K562 (cell line): ENCODE measurements at regions of chr1 and their contacts with region 1.

Region 1: GRCh38 chr1:233790662-233791375 is 113.7 kb upstream of the SLC35F3 start:
- DNase-seq: peak; percentile 77 to 86 (median 81)
- ATAC-seq: peak; percentile 99
- H3K4me3 ChIP-seq: no peak overlapping the region
- H3K27ac ChIP-seq: no peak overlapping the region
- H3K4me1 ChIP-seq: no peaks in the 10 kb centered on the region
- H3K27me3 ChIP-seq: no peaks in the 10 kb centered on the region
- CTCF ChIP-seq: peak; percentile 89 to 95 (median 93)
- EP300 ChIP-seq: no peak
- POLR2A ChIP-seq: no peak
- RAD21 ChIP-seq: peak; percentile 93 to 98

Region 2: GRCh38 chr1:233252441-233252840 is 538.4 kb before region 1 on chr1:
- CTCF ChIA-PET with region 1: no interaction called
- POLR2A ChIA-PET with region 1: no interaction called
- in situ Hi-C with region 1: no loop called
- intact Hi-C with region 1: no loop called
- DNase-seq: no peak
- ATAC-seq: no peak
- H3K4me3 ChIP-seq: no peak overlapping the region
- H3K27ac ChIP-seq: no peak overlapping the region
- H3K4me1 ChIP-seq: no peaks in the 10 kb centered on the region
- H3K27me3 ChIP-seq: 0 out of 5 replicates have a peak, but pooled peaks cover 0 to 2% of the 10 kb centered on the region in 2 experiments
- CTCF ChIP-seq: no peak
- EP300 ChIP-seq: no peak
- POLR2A ChIP-seq: no peak
- RAD21 ChIP-seq: no peak

Region 3: DNA sequence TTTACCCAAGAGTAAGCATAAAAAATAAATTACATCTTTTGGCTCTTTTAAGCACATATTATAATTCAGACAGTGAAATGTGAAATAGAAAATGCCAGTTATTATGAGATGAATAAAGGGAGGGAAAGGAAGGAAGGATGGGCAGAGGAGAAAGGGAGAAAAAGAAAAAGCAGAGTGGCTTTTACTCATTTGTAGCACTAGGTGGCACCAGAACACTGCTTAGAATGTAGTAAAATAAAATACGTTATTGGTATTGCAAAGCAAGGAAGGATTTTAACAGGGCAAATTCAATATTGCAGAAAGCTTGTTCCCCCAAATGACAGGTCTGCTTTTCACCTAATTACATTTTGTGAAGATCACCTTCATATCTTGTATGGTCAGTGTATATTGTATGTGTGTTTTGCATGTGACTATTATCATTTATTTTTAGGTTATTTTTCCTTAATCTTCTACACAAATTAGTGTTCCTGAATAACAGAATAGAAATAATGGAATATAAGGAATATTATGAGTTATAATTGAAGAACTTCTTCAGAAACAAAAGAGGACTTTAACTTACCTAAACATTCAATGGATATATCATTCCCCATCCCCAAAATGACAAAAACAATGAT is 486.2 kb before region 1 on chr1:
- CTCF ChIA-PET with region 1: no interaction called
- POLR2A ChIA-PET with region 1: no interaction called
- in situ Hi-C with region 1: no loop called
- intact Hi-C with region 1: loop called (anchors 10 kb)
- DNase-seq: peak; percentile 20 to 29 (median 26)
- ATAC-seq: peak; percentile 69
- H3K4me3 ChIP-seq: no peak overlapping the region
- H3K27ac ChIP-seq: no peak overlapping the region
- H3K4me1 ChIP-seq: no peaks in the 10 kb centered on the region
- H3K27me3 ChIP-seq: no peaks in the 10 kb centered on the region
- CTCF ChIP-seq: peak; percentile 45 to 82 (median 68); a peak in 5 of 6 replicates
- EP300 ChIP-seq: no peak
- POLR2A ChIP-seq: no peak
- RAD21 ChIP-seq: peak; percentile 74 to 85

Region 4: DNA sequence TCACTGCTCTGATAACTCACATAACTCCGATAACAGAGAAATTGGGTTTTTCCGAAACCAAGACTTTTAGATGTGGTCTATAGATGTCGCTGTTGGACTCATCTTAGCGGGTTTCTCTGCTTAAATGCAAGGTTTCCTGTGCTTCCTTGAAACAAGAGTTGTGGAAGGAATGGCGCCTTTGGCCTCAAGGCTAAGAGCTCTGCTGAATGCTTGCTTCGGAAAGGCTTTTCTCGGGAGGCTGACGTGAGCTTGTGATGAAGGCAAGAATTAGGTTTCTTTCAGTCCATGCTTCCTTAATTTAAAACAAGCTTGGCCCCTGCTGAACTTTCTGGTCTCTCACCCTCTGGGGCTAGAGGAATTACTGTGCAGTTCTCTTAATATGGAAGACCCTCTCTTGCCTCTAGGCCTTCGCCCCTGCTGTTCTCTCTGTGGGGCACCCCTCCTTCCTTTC is 349.8 kb before region 1 on chr1:
- CTCF ChIA-PET with region 1: interaction called, 14 read pairs
- POLR2A ChIA-PET with region 1: interaction called, 3 read pairs
- in situ Hi-C with region 1: no loop called
- intact Hi-C with region 1: loop called (anchors 1 kb)
- DNase-seq: peak; percentile 37 to 79 (median 52)
- ATAC-seq: peak; percentile 90
- H3K4me3 ChIP-seq: no peak overlapping the region
- H3K27ac ChIP-seq: no peak overlapping the region
- H3K4me1 ChIP-seq: peaks cover 0 to 4% of the 10 kb centered on the region in 2 experiments; a peak in 2 of 5 replicates
- H3K27me3 ChIP-seq: no peaks in the 10 kb centered on the region
- CTCF ChIP-seq: peak; percentile 78 to 95 (median 83)
- EP300 ChIP-seq: 0 out of 2 replicates have a peak, but pooled peaks have one; percentile 12
- POLR2A ChIP-seq: no peak
- RAD21 ChIP-seq: peak; percentile 91 to 95

Region 5: DNA sequence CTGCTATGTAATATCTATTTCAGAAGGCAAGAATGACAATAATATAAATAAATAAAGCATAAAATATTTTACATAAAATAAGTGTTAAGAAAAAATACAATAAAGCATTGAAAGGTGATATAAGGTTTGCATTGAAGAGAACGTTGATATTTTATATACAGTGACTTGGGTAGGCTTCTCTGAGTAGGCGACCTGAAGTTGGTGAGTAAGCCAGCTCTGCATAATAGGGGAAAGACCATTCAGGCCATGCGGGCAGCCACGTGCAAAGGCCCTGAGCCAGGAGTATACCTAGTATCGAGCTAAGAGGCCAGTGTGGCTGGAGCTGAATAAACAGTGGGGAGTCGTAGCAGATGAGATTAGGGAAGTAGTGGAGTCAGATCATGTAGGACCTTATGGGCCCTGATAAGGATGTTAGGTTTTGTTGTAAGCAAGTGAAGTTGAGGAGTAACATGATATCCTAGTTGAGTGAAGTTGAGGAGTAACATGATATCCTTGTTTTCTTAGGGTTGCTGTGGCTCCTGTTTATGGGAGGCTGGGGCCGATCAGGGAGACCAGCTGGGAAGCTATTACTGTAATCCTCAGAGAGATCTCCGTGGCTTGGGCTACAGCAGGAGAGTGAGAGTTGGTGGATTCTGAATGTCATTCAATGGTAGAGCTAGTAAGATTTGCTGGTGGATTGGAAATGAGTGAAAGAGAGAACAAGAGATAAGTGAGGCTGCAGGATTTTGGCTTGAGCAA is 154.9 kb before region 1 on chr1:
- CTCF ChIA-PET with region 1: no interaction called
- POLR2A ChIA-PET with region 1: no interaction called
- in situ Hi-C with region 1: no loop called
- intact Hi-C with region 1: loop called (anchors 10 kb)
- DNase-seq: peak; percentile 92 to 98 (median 94)
- ATAC-seq: peak; percentile 97
- H3K4me3 ChIP-seq: no peak overlapping the region; the same call in 1 of the 2 replicates
- H3K27ac ChIP-seq: peak overlapping the region; percentile 90
- H3K4me1 ChIP-seq: peaks cover 11 to 43% of the 10 kb centered on the region in 2 experiments
- H3K27me3 ChIP-seq: no peaks in the 10 kb centered on the region
- CTCF ChIP-seq: 0 out of 6 replicates have a peak, but pooled peaks of 1 of the 3 experiments have one; percentile 6
- EP300 ChIP-seq: peak; percentile 98
- POLR2A ChIP-seq: peak; percentile 56; the same call in 1 of the 2 replicates
- RAD21 ChIP-seq: peak; percentile 4 to 41; a peak in 2 of 4 replicates

Region 6: DNA sequence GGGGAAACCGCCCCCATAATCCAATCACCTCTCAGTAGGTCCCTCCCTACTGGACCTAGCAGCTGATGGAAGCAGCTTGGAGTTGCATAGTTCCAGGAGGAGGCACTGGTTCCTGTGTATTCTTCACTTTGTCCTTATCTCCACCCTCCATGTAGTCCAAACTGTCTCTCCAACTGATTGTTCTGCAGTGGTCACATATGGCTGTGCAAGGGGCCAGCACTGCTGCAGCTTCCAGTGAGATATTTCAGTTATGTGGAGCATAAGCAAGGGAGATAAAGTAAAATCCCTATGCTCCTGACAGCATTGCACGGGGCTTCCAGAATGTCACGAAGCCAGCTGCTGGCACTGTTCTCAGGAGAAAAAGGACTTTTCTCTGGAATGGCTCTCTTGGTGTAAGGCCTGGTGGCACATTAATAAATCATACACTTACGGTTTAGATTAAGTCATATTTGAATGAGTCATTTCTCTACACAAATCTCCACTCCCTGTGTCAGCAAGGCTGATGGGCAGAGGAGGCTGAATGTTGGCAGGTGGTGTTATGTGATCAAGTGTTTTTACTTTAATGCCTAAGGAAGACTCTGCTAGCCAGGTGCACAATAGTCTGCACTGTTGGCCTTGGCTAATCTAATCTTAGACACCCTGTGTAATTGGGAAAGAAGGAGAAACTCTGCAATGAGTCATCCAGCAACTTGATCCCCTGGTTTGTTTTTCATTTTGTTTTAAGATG is 83.5 kb before region 1 on chr1:
- CTCF ChIA-PET with region 1: no interaction called
- POLR2A ChIA-PET with region 1: no interaction called
- in situ Hi-C with region 1: no loop called
- intact Hi-C with region 1: loop called (anchors 5 kb)
- DNase-seq: peak; percentile 37 to 89 (median 65)
- ATAC-seq: peak; percentile 93
- H3K4me3 ChIP-seq: no peak overlapping the region
- H3K27ac ChIP-seq: peak overlapping the region; percentile 73
- H3K4me1 ChIP-seq: peaks cover 7 to 45% of the 10 kb centered on the region in 2 experiments; a peak in 4 of 5 replicates
- H3K27me3 ChIP-seq: no peaks in the 10 kb centered on the region
- CTCF ChIP-seq: peak; percentile 43 to 53 (median 51); a peak in 4 of 6 replicates
- EP300 ChIP-seq: peak; percentile 85
- POLR2A ChIP-seq: no peak
- RAD21 ChIP-seq: peak; percentile 10 to 43; a peak in 2 of 4 replicates

Region 7: GRCh38 chr1:234342774-234343173 is 552.0 kb after region 1 on chr1:
- CTCF ChIA-PET with region 1: no interaction called
- POLR2A ChIA-PET with region 1: no interaction called
- in situ Hi-C with region 1: no loop called
- intact Hi-C with region 1: no loop called
- DNase-seq: no peak
- ATAC-seq: no peak
- H3K4me3 ChIP-seq: no peak overlapping the region
- H3K27ac ChIP-seq: no peak overlapping the region
- H3K4me1 ChIP-seq: no peaks in the 10 kb centered on the region
- H3K27me3 ChIP-seq: no peaks in the 10 kb centered on the region; a peak in 1 of 5 replicates
- CTCF ChIP-seq: no peak
- EP300 ChIP-seq: no peak
- POLR2A ChIP-seq: no peak
- RAD21 ChIP-seq: no peak